BJ (cell line): ENCODE measurements at regions of chr15 and their contacts with region 1.

Region 1: DNA sequence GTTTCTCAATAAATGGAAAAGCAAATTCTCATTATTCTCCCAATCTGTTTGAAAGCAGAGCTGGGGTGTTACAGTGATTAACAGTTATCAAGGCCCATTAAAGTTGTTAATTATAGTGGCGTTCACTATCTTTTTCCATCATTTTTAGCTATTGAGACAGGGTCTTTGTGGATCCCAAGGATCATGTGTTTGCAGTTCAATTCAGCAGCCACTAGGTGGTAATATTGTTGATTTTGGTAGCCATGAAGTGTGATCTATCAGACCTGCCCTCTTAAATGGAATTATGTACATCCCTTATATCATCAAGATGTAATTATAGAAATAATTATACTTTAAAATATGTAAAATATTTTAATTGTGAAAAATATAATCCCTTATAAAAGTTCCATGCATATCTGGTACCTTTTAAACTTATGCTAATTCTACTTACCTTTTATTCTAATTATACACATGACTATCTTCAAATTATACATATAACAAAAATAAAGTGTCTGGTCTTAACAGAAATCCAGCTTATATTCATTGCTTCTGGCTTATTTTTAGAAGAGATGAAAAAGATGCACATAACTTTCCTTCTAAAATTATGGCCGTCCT is 126.4 kb downstream of the GREM1 start:
- DNase-seq: no peak
- H3K4me3 ChIP-seq: no peak overlapping the region
- H3K27me3 ChIP-seq: no peaks in the 10 kb centered on the region
- CTCF ChIP-seq: peak; percentile 64

Region 2: GRCh38 chr15:32651229-32651837 is 192.9 kb before region 1 on chr15:
- CTCF ChIA-PET with region 1: interaction called, 11 read pairs
- POLR2A ChIA-PET with region 1: no interaction called
- DNase-seq: no peak
- H3K4me3 ChIP-seq: no peak overlapping the region
- H3K27me3 ChIP-seq: no peaks in the 10 kb centered on the region; the same call in 1 of the 2 replicates
- CTCF ChIP-seq: peak; percentile 98

Region 3: GRCh38 chr15:32669896-32670619 is 174.2 kb before region 1 on chr15:
- CTCF ChIA-PET with region 1: interaction called, 31 read pairs
- POLR2A ChIA-PET with region 1: interaction called, 3 read pairs
- DNase-seq: peak; percentile 87
- H3K4me3 ChIP-seq: peak overlapping the region; percentile 22
- H3K27me3 ChIP-seq: no peaks in the 10 kb centered on the region
- CTCF ChIP-seq: no peak

Region 4: GRCh38 chr15:32834156-32834555 is 10.1 kb before region 1 on chr15:
- CTCF ChIA-PET with region 1: interaction called, 34 read pairs
- POLR2A ChIA-PET with region 1: no interaction called
- DNase-seq: no peak
- H3K4me3 ChIP-seq: no peak overlapping the region
- H3K27me3 ChIP-seq: no peaks in the 10 kb centered on the region
- CTCF ChIP-seq: no peak

Region 5: DNA sequence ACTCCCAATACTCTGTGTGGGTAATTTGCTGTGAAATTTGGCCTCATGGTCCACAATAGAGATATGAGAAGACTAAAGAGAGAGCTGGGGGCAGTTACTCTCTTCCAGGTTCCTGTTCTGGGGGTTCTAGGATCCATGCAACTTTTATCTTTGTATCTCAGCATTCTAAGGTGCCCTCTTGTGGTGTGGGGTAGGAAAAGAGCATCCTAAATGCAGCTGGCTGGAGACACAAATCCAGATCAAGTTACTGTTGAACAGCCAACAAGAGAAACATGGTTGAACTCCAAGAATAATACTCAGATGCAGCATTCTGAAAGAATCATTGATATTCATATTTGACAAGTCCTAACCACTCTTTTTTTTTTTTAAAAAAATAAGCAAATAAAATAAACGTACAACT is 111.8 kb after region 1 on chr15:
- CTCF ChIA-PET with region 1: interaction called, 16 read pairs
- POLR2A ChIA-PET with region 1: no interaction called
- DNase-seq: peak; percentile 31
- H3K4me3 ChIP-seq: no peak overlapping the region
- H3K27me3 ChIP-seq: no peaks in the 10 kb centered on the region
- CTCF ChIP-seq: peak; percentile 75

Region 6: GRCh38 chr15:32994810-32995424 is 150.7 kb after region 1 on chr15:
- CTCF ChIA-PET with region 1: interaction called, 11 read pairs
- POLR2A ChIA-PET with region 1: no interaction called
- DNase-seq: no peak
- H3K4me3 ChIP-seq: no peak overlapping the region
- H3K27me3 ChIP-seq: no peaks in the 10 kb centered on the region
- CTCF ChIP-seq: peak; percentile 62

Region 7: DNA sequence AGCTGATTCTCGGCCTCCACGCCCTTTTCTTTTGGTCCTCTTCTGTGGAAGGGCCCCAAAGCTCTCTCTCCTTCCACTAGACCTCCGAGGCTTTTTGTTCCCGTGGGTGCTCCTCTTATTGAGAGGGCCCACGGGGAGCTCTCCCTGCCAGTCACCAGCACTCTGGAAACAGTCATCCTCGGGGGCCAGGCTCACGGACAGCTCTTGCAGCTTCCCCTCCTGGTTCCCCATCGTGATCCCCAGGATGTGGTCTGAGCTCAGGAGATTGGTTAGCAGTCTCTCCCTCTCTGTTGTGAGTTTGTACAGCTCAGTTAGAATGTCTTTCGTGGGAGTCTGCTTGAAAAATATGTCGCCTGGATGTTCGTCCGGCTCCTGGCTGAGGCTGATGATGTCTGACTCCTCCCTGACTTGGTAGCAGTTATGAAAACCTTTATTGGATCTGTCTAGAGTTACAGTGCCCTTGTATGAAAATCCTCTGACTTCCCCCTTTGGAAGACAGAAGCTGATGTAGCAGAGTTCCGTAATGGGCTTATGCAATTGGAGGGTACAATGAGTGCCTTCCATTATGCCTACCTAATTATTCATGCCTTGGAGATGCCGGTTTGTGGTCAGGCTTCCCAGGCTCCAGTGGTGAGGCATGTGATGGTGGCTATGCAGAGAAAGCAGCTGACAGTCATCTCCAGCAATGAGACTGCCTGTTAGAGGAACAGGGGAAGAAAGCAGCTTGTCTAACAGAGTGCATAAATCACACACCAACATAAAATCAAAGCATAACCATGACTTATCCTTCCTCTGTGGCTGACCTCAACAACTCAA is 310.3 kb after region 1 on chr15:
- CTCF ChIA-PET with region 1: no interaction called
- POLR2A ChIA-PET with region 1: no interaction called
- DNase-seq: peak; percentile 53
- H3K4me3 ChIP-seq: no peak overlapping the region
- H3K27me3 ChIP-seq: peaks cover 3% of the 10 kb centered on the region
- CTCF ChIP-seq: no peak